ENCODE measurements at regions of chr12 and their contacts with region 1.

Region 1: GRCh38 chr12:6187948-6188793 is 12.0 kb upstream of the CD9 start:
- DNase-seq: no peak
- H3K4me3 ChIP-seq: no peak overlapping the region
- H3K27ac ChIP-seq: peak overlapping the region in 4 of 59 donors; percentile 1 to 48 (median 3)
- H3K27me3 ChIP-seq: no peaks in the 10 kb centered on the region
- CTCF ChIP-seq: no peak

Region 2: GRCh38 chr12:6069437-6070107 is 118.6 kb before region 1 on chr12:
- intact Hi-C with region 1: loop called in 1 of 2 experiments (anchors 5 kb)
- DNase-seq: peak in 4 of 10 donors; percentile 29 to 68 (median 49)
- H3K4me3 ChIP-seq: no peak overlapping the region
- H3K27ac ChIP-seq: peak overlapping the region in 2 of 59 donors; percentile 0 to 29
- H3K27me3 ChIP-seq: peaks cover 0 to 8% (median 0%) of the 10 kb centered on the region in 45 donors
- CTCF ChIP-seq: no peak

Region 3: DNA sequence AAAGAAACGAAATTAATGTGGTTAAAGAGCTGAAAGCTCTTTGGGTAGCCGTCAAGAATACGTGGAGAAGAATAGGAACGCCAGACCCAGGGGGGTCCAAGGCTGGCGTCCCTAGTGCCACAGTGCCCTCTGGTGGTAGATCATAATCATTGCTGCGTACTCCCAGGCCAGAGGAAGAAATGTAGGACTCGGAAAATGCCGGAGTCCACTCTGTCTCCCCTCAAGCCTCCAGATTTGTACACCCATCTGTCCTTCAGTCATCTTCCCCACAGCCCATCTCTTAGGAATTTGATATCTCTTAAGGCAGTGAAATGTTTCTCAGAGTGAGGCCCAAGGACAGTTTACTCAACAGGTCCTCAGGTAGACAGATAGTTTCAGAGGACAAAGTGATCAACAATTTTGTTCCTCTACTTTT is 96.9 kb after region 1 on chr12:
- intact Hi-C with region 1: no loop called
- DNase-seq: peak in 8 of 10 donors; percentile 28 to 73 (median 46)
- H3K4me3 ChIP-seq: no peak overlapping the region
- H3K27ac ChIP-seq: peak overlapping the region in 1 of 59 donors; percentile 10
- H3K27me3 ChIP-seq: peaks cover 0 to 12% (median 0%) of the 10 kb centered on the region in 45 donors
- CTCF ChIP-seq: peak; percentile 87 to 100 (median 96)

Measured in dorsolateral prefrontal cortex (tissue), 120 donors.